ENCODE measurements at regions of chr9 and their contacts with region 1.

Region 1: DNA sequence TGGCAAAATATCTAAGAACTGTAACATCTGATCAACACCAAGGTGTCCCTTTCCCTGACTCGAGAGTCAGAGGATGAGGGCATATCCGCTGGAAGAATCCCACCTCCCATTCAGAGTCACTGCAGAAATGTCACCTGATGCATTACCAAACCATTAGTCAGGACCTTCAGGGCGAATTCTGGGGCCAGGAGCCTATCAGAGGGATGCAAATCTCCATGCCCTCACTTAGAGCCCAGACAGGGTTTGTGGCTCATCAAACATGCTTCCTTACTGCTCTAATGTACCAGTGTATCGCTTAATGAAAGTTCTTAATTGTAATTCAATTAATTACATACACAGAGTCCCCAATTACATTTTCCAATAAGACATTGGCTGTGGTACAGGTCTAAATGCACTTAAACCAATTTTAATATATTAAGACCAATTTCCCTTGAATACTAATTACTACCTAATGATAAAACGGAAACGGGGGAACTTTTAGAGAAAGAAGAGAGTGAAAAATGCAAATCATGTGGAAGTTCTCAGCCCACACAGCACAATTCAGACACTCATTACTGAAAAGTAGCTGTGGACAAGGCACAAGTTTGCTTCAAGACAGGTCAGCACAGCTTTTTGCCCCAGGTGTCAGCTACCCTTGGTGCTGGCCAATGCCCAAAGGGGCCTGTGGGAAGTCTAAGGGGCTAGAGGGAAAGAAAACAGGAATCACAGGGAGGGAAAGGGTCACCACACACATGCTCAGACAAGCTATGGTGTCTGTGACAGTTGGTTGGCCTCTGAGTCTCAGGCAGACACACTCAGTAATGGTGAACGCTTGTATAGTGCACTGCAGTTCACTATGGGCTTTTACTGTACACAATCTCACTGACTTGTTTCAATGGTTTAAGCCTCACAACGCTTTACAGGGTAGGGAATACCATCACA is 211.6 kb downstream of the MAPKAP1 start:
- DNase-seq: peak; percentile 62 to 71
- H3K4me3 ChIP-seq: no peak overlapping the region
- H3K27ac ChIP-seq: peak overlapping the region; percentile 35
- H3K4me1 ChIP-seq: peaks cover 22% of the 10 kb centered on the region
- H3K27me3 ChIP-seq: no peaks in the 10 kb centered on the region
- CTCF ChIP-seq: no peak

Region 2: GRCh38 chr9:125484350-125485282 is 10.8 kb before region 1 on chr9:
- CTCF ChIA-PET with region 1: no interaction called
- POLR2A ChIA-PET with region 1: interaction called, 10 read pairs
- intact Hi-C with region 1: no loop called
- DNase-seq: no peak
- H3K4me3 ChIP-seq: no peak overlapping the region
- H3K27ac ChIP-seq: no peak overlapping the region
- H3K4me1 ChIP-seq: no peaks in the 10 kb centered on the region
- H3K27me3 ChIP-seq: no peaks in the 10 kb centered on the region
- CTCF ChIP-seq: no peak

Region 3: DNA sequence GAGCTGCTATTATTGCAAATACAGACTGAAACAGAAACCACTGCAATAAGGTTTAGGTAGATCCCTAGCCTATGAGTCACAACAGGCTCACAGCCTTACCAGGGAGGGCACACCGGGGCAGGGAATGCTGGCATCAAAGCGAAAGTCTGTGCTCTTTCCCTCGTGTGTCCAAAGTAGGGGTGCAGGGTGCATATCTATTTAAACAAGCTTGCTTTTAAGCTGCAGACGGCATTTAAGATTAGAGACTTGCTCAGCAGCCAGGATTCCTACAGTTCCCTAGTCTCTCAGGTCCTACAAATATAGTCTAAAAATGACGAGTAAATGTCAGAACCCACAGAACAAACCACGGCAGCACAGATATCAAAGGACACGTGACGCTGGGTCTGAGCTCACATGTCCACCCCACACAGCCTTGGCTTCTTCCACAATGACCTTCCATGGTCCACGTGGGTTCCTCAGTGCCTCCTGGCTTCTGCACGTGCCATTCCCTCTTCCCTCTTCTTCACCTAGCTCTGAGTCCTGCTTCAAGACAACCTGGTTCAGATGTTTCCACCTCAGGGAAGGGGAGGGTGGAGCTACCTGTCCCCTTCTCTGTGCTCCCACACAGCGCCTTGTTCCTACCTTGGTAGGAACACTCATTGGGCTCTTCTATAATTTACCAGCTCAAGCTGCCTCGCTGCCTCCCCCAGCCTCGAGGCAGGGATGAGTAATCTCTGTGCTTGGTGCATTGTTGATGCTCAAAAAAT is 18.4 kb after region 1 on chr9:
- CTCF ChIA-PET with region 1: no interaction called
- POLR2A ChIA-PET with region 1: interaction called, 5 read pairs
- intact Hi-C with region 1: loop called (anchors 2 kb)
- DNase-seq: peak; percentile 75 to 95
- H3K4me3 ChIP-seq: peak overlapping the region; percentile 57
- H3K27ac ChIP-seq: peak overlapping the region; percentile 85
- H3K4me1 ChIP-seq: peaks cover 25% of the 10 kb centered on the region
- H3K27me3 ChIP-seq: no peaks in the 10 kb centered on the region
- CTCF ChIP-seq: no peak